ENCODE measurements at regions of chr5 and their contacts with region 1.

Region 1: GRCh38 chr5:142012792-142013388 is at the start of gene GNPDA1:
- DNase-seq: peak; percentile 89
- H3K4me3 Mint-ChIP-seq: peak within 1 kb of the TSS; percentile 80
- H3K27ac Mint-ChIP-seq: peak within 1 kb of the TSS; percentile 96
- H3K4me1 Mint-ChIP-seq: peaks cover 36% of the 10 kb centered on the region
- H3K27me3 Mint-ChIP-seq: no peaks in the 10 kb centered on the region
- CTCF ChIP-seq: no peak
- total RNA-seq, gene GNPDA1: 53.2 and 54.0 TPM in 2 replicates

Region 2: GRCh38 chr5:141742866-141743851 is 269.7 kb before region 1 on chr5:
- CTCF ChIA-PET with region 1: no interaction called
- intact Hi-C with region 1: no loop called
- DNase-seq: peak; percentile 72
- H3K4me3 Mint-ChIP-seq: no peak overlapping the region
- H3K27ac Mint-ChIP-seq: no peak overlapping the region
- H3K4me1 Mint-ChIP-seq: no peaks in the 10 kb centered on the region
- H3K27me3 Mint-ChIP-seq: peaks cover 85% of the 10 kb centered on the region
- CTCF ChIP-seq: no peak

Region 3: GRCh38 chr5:142024771-142025304 is 11.9 kb after region 1 on chr5:
- CTCF ChIA-PET with region 1: interaction called, 14 read pairs
- intact Hi-C with region 1: no loop called
- DNase-seq: peak; percentile 85
- H3K4me3 Mint-ChIP-seq: peak overlapping the region; percentile 79
- H3K27ac Mint-ChIP-seq: peak overlapping the region; percentile 68
- H3K4me1 Mint-ChIP-seq: peaks cover 10% of the 10 kb centered on the region
- H3K27me3 Mint-ChIP-seq: no peaks in the 10 kb centered on the region
- CTCF ChIP-seq: no peak

Region 4: DNA sequence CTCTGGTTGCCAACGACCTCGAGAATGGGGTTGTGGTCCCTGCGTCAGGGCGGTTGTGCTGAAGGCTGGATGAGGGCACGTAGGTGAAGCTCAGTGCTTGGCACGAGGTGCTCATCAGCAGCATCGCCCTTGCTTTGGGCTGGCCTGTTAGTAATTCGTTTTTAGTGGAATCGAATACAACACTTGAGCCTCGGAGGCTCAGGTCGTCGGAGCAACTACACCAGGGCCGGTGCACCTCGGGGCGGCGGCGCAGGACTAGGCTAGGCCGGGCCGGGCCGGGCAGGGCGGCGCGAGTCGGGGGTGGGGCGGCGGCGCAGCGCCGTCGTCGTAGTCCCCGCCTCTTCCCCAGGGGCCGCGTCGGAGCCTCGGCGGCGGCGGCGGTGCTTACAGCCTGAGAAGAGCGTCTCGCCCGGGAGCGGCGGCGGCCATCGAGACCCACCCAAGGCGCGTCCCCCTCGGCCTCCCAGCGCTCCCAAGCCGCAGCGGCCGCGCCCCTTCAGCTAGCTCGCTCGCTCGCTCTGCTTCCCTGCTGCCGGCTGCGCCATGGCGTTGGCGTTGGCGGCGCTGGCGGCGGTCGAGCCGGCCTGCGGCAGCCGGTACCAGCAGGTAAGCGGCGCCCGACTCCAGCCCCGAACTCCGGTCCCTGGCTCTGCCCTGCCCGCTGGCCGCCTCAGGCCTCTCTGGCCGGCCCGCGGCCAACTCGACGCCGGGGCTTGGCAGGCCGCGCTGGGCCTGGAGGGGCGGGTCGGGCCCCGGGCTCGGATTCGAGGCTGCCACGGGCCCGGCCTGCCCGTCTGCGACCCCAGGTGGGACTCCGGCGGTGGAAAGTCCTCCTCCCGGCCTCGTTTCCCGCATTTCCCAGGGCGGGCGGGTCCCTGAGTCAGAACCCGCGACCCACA is 95.8 kb after region 1 on chr5 and contains the start of gene NDFIP1:
- CTCF ChIA-PET with region 1: interaction called, 8 read pairs
- intact Hi-C with region 1: loop called (anchors 2 kb)
- DNase-seq: peak; percentile 94
- H3K4me3 Mint-ChIP-seq: peak within 1 kb of the TSS; percentile 95
- H3K27ac Mint-ChIP-seq: peak within 1 kb of the TSS; percentile 76
- H3K4me1 Mint-ChIP-seq: peaks cover 26% of the 10 kb centered on the region
- H3K27me3 Mint-ChIP-seq: no peaks in the 10 kb centered on the region
- CTCF ChIP-seq: no peak
- total RNA-seq, gene NDFIP1: 58.0 and 70.1 TPM in 2 replicates

Measured in Calu3 (cell line).